Aorta (tissue), 5 donors: ENCODE measurements at regions of chr7 and their contacts with region 1.

Region 1: DNA sequence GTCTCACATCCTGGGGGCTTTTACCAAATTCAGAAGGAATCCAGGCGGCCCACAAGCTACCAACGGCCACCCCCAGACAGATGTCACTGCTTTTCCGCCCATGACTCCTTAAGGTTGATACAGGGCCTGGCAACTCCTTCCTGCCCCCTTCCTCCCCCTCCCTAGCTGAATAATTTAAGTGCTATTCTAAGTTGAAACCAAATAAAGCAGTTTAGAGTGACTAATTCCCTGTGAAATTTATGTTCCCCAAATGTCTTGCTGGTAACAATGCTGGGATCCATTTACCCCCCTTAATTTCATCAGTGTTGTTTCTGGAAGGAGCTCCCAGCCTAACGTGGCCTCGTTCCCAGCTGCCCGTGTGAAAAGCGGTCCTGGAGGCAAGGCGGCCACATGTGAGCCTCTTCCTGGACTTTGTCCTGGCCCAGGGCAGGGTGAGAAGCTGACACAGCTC is 109.6 kb downstream of the TMEM130 start:
- DNase-seq: peak; percentile 85 to 88
- ATAC-seq: peak; percentile 80
- H3K4me3 ChIP-seq: no peak overlapping the region
- H3K27ac ChIP-seq: peak overlapping the region; percentile 6 to 93
- H3K4me1 ChIP-seq: peaks cover 0 to 2% of the 10 kb centered on the region in 2 donors
- H3K27me3 ChIP-seq: no peaks in the 10 kb centered on the region

Region 2: GRCh38 chr7:98724591-98724990 is 35.6 kb before region 1 on chr7:
- intact Hi-C with region 1: no loop called
- DNase-seq: no peak
- ATAC-seq: no peak
- H3K4me3 ChIP-seq: no peak overlapping the region
- H3K27ac ChIP-seq: no peak overlapping the region
- H3K4me1 ChIP-seq: no peaks in the 10 kb centered on the region
- H3K27me3 ChIP-seq: no peaks in the 10 kb centered on the region

Region 3: DNA sequence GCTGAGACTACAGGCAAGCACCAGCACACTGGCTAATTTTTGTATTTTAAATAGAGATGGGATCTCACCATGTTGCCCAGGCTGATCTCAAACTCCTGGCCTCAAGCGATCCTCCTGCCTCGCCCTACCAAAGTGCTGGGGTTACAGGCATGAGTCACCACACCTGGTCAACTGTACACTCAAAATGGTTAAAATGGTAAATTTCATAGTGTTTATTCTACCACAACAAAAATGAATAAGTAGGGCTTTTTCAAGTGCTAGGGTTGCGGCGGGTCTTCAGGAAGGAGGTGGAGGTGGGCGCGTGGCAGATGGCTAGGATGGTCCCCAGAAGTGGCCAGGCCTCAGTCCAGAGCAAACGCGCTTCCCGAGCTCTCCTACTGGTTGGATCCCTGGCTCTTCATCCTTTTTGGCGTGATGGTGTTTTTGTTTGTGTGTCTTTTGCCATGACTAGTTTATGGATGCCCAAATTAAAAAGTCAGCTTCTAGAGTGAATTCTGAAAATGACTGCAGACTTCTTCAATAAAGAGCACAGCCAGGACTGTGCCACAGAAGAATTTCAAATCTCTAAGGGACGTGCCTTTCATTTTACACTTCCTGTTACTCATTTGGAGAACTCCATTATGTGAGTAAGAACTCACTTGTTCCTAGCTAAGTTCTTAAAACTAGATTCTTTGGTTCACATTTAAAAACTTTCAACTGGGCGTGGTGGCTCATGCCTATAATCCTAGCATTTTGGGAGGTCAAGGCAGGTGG is 35.7 kb after region 1 on chr7:
- intact Hi-C with region 1: loop called in 1 of 2 experiments (anchors 5 kb)
- DNase-seq: no peak
- ATAC-seq: no peak
- H3K4me3 ChIP-seq: no peak overlapping the region
- H3K27ac ChIP-seq: peak overlapping the region; percentile 34 to 65
- H3K4me1 ChIP-seq: peaks cover 2 to 3% of the 10 kb centered on the region in 2 donors
- H3K27me3 ChIP-seq: no peaks in the 10 kb centered on the region

Region 4: DNA sequence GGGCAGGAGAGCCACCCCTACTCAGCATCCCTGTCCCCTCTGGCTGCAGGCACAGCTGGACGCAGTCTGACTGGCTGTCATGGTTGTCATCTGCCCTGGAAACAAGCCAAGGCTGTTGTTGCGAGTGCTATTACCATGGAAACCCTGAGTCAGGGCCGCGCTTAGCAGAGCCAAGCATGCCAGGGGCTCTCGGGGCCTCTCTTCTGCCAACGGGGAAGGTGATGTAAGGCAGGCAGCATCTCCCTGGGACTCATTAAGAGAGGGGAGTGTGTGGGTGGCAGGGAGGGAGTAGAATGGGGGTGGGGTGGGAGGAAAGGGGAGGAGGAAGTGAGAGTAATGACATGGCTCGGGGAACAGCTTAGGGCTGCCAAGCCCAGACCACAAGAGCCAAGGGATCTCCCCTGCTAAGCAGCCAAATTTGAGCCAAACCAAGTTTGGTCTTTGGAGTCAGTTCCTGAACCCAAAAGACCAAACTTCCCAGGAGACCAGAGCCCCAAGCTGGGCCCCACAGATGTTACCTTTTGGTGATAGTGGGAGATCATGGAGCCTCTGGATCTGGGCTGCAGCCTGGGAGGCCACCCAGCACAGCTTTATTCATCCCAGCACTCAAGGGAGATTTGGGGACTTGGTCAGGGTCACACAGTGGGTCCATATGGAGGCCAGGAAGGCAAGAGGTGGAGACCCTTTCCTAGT is 42.0 kb after region 1 on chr7:
- intact Hi-C with region 1: loop called (anchors 1 to 5 kb)
- DNase-seq: peak; percentile 91 to 92
- ATAC-seq: peak; percentile 83
- H3K4me3 ChIP-seq: no peak overlapping the region
- H3K27ac ChIP-seq: peak overlapping the region in 1 of 2 donors; percentile 66
- H3K4me1 ChIP-seq: peaks cover 0 to 1% of the 10 kb centered on the region in 2 donors
- H3K27me3 ChIP-seq: no peaks in the 10 kb centered on the region

Region 5: DNA sequence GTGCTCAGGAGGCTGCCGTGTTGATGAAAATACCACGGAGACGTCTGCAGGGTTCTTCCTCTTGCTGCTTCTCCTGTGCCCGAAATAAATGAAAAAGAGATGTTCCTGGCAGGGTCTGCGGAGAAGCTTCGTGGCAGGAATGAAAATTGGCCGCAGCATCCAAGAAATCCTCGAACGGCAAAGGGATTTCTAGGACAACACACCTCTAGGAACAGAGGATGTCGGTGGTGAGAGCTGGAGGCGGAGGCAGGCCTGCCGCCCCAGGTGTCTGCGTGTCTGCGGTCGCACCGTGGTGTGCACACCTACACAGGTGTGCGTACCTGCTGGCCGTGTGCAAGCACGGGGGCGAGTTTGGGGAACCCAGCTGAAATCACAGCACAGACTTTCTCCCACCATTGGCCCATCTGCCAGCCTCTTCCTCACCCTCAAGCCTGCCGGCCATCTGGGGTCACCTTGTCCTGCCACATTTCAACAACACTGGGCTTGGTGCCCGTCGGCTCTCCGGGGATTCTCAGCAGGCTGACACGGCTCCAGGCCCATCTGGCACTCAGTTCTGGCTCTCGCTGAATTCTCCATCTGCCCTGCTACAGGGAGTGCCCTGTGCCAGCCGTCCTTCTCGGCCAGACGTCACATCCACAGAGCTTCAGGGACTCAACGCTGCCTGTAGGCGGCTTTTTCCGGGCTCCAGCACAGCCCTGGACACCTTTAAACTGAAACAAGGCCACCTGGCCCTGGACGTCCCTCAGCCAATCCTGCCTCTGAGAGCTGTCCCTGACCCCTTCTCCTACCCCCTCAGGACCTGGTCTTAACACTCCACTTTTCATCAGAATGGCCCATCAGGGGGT is 66.4 kb after region 1 on chr7:
- intact Hi-C with region 1: loop called (anchors 2 to 5 kb)
- DNase-seq: peak; percentile 91 to 95
- ATAC-seq: peak; percentile 91
- H3K4me3 ChIP-seq: no peak overlapping the region
- H3K27ac ChIP-seq: peak overlapping the region; percentile 23 to 34
- H3K4me1 ChIP-seq: no peaks in the 10 kb centered on the region
- H3K27me3 ChIP-seq: no peaks in the 10 kb centered on the region